Activated CD8-positive, alpha-beta memory T cell treated with anti-CD3 and anti-CD28 coated beads, Interleukin-2, amount 10 ng/mL, durations not matched to agents 7 days and 5 days (primary cell): ENCODE measurements at regions of chr2 and their contacts with region 1.

Region 1: GRCh38 chr2:218852911-218853667 is 6.5 kb upstream of the WNT6 start:
- DNase-seq: peak; percentile 73
- ATAC-seq: peak; percentile 68
- H3K4me3 Mint-ChIP-seq: no peak overlapping the region
- H3K27ac Mint-ChIP-seq: no peak overlapping the region
- H3K4me1 Mint-ChIP-seq: no peaks in the 10 kb centered on the region
- H3K27me3 Mint-ChIP-seq: peaks cover 70% of the 10 kb centered on the region

Region 2: DNA sequence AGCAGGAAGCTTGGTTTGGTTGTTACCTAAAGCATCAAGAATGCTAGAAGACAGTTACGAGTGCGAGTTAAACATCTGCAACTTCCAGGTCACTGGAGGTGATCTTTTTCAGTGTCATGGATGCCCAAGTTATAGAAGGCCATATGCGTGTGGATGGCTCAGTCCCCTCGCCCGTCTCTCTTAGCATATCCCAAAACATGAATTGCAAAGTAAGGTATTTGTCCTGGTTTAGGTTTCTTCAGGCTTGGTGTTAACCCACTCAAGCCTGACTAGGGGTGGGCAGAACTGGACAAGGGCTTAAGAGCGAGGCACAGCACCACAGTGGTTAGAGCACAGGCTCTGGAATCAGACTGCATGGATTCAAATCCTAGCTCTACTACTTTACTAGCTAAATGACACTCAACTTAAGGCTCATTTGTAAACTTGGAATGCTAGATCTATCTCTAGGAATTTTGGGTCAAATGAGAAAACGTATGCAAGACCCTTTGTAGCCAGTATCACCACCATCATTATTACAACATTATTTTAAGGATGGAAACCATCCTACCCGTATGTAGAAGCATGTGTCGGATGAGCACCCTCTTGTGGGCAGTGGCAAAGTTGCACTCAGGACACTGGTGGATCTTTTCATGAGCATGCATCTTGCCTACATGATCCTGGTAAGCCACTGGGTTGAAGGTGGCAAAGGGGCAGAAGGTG is 204.9 kb before region 1 on chr2:
- CTCF ChIA-PET with region 1: interaction called, 12 read pairs
- DNase-seq: peak; percentile 72
- ATAC-seq: peak; percentile 81
- H3K4me3 Mint-ChIP-seq: no peak overlapping the region
- H3K27ac Mint-ChIP-seq: no peak overlapping the region
- H3K4me1 Mint-ChIP-seq: peaks cover 4% of the 10 kb centered on the region
- H3K27me3 Mint-ChIP-seq: no peaks in the 10 kb centered on the region

Region 3: DNA sequence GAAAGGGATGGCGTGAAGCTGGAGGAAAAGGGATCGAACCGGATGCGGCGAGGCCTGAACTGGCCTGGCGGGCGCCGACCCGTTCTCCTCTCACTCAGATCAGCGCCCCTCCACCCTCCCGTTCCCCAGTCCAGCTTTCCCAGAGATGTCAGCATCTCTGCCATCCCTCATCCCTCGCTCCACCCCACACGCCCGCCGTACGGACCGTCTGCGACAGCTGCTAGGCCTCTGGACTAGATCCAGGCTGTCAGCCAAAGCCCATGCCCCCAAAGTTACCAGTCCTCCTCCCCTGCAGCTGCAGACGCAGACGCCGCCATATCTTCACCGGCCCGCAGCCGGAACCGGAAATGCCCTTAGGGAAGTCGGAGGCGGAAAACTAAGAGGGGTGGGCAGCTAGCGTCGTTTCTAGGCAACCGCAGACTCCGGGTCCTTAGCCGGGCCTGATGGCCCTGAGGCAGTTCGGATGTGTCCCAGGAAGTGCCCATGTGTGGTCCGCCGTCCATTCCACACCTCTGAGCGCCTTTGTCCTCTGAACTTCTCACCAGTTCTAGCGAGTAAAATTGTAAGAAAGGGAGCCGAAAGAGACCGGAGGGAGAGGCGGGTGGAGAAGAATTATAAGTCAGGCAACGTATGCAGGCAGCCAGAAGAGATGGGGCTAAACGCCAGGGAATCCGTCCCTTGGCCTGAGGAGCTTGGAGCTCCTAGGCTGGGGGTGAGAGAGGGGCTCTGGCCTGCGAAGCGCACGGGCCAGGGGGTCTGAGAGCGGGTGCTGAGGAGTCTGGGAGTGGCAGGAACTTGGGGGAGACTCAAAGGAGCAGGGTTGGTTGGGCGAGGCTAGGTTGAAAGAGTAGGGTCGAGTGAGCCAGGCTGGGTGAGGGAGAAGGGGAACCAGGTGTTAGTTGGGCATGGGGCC is 181.2 kb before region 1 on chr2 and contains the starts of genes RNF25 and STK36:
- CTCF ChIA-PET with region 1: interaction called, 25 read pairs
- DNase-seq: peak; percentile 89
- ATAC-seq: peak; percentile 97
- H3K4me3 Mint-ChIP-seq: peak within 1 kb of the TSS; percentile 98
- H3K27ac Mint-ChIP-seq: peak within 1 kb of the TSS; percentile 91
- H3K4me1 Mint-ChIP-seq: peaks cover 24% of the 10 kb centered on the region
- H3K27me3 Mint-ChIP-seq: no peaks in the 10 kb centered on the region
- total RNA-seq, gene RNF25: 22.0 to 25.7 TPM
- total RNA-seq, gene STK36: 16.8 to 22.4 TPM

Region 4: GRCh38 chr2:218727502-218728165 is 125.5 kb before region 1 on chr2:
- CTCF ChIA-PET with region 1: interaction called, 76 read pairs
- DNase-seq: no peak
- ATAC-seq: no peak
- H3K4me3 Mint-ChIP-seq: no peak overlapping the region
- H3K27ac Mint-ChIP-seq: no peak overlapping the region
- H3K4me1 Mint-ChIP-seq: peaks cover 21% of the 10 kb centered on the region
- H3K27me3 Mint-ChIP-seq: no peaks in the 10 kb centered on the region

Region 5: GRCh38 chr2:218832520-218832919 is 20.6 kb before region 1 on chr2:
- CTCF ChIA-PET with region 1: no interaction called
- DNase-seq: no peak
- ATAC-seq: no peak
- H3K4me3 Mint-ChIP-seq: no peak overlapping the region
- H3K27ac Mint-ChIP-seq: no peak overlapping the region
- H3K4me1 Mint-ChIP-seq: no peaks in the 10 kb centered on the region
- H3K27me3 Mint-ChIP-seq: peaks cover 34% of the 10 kb centered on the region

Region 6: GRCh38 chr2:218898109-218898878 is 45.2 kb after region 1 on chr2:
- CTCF ChIA-PET with region 1: interaction called, 38 read pairs
- DNase-seq: peak; percentile 84
- ATAC-seq: peak; percentile 57
- H3K4me3 Mint-ChIP-seq: no peak overlapping the region
- H3K27ac Mint-ChIP-seq: no peak overlapping the region
- H3K4me1 Mint-ChIP-seq: peaks cover 39% of the 10 kb centered on the region
- H3K27me3 Mint-ChIP-seq: peaks cover 64% of the 10 kb centered on the region